ENCODE measurements at regions of chr19 and their contacts with region 1.

Region 1: GRCh38 chr19:40155749-40156265 is 35.4 kb upstream of the MAP3K10 start:
- DNase-seq: peak; percentile 99
- ATAC-seq: peak; percentile 90
- H3K4me3 ChIP-seq: peak overlapping the region in 1 of 2 experiments; percentile 5; a peak in 2 of 4 replicates
- H3K27ac ChIP-seq: no peak overlapping the region
- H3K4me1 ChIP-seq: 0 out of 2 replicates have a peak, but pooled peaks cover 2% of the 10 kb centered on the region
- H3K27me3 ChIP-seq: no peaks in the 10 kb centered on the region
- CTCF ChIP-seq: no peak

Region 2: GRCh38 chr19:39474139-39474622 is 681.6 kb before region 1 on chr19:
- CTCF ChIA-PET with region 1: interaction called, 3 read pairs
- POLR2A ChIA-PET with region 1: interaction called, 10 read pairs
- in situ Hi-C with region 1: no loop called
- intact Hi-C with region 1: no loop called
- DNase-seq: no peak
- ATAC-seq: peak; percentile 75
- H3K4me3 ChIP-seq: no peak overlapping the region
- H3K27ac ChIP-seq: no peak overlapping the region
- H3K4me1 ChIP-seq: no peaks in the 10 kb centered on the region
- H3K27me3 ChIP-seq: no peaks in the 10 kb centered on the region
- CTCF ChIP-seq: no peak

Region 3: DNA sequence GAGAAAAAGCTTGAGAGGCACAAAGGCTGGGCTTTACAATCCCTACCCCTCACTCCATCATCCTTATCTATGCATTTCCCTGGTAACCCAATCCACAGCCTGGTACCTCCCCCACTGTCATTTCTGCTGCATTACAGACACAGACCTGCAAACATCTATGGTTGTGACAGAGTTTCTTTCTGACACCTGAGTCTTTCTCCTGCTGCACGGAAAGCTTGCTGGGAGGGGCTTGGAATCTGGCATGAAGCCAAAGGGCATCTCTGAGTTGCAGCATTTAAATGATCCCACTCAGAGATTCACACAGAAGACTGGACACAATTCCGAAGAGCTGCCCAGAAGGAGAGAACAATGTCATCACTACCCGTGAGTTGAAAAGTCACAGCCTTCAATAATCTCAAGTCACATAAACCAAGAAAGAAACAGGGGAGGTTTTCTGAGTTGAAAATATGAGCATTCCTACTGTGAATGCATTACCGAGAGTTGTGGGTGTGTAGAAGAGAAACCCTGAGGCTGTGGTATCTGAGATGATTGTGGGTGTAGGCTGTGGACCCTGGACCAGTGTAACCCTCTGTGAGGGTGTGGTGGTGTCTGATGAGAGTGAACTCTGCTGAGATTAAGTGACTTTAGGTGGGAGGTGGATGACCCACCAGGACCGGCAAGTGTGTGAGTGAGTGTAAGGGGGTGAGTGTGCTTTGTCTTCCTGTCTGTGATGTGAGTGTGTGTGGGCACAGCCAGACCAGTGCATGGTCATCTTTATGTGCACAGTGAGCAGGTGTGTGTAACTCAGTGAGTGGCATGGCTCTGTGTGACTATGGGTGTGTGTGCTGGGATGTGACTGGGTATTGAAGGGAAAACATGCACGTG is 451.4 kb before region 1 on chr19 and contains the start of gene LGALS14:
- CTCF ChIA-PET with region 1: no interaction called
- POLR2A ChIA-PET with region 1: no interaction called
- in situ Hi-C with region 1: no loop called
- intact Hi-C with region 1: no loop called
- DNase-seq: no peak
- ATAC-seq: peak; percentile 52
- H3K4me3 ChIP-seq: no peak within 1 kb of the TSS
- H3K27ac ChIP-seq: no peak within 1 kb of the TSS
- H3K4me1 ChIP-seq: no peaks in the 10 kb centered on the region
- H3K27me3 ChIP-seq: peaks cover 78% of the 10 kb centered on the region
- CTCF ChIP-seq: no peak
- total RNA-seq, gene LGALS14: not detected

Region 4: DNA sequence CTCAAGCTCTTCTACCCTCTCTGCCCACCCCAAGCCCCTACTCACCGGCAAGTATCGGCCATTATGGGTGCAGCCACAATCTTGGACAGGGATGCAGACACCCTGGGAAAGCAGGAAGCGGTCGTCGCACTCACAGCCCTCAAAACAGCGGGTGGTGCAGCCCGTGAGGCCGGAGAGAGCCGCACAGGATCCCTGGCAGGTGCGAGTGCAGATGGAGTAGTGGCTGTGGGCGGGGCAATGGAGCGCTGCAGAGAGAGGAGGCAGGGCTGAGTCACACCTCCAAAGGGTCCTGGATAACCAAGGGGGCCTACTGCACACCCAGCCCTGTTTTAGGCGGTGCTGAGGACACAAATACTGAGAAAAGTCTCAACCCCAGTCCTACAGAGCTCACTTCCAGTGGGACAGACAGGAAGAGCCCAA is 285.6 kb before region 1 on chr19:
- CTCF ChIA-PET with region 1: no interaction called
- POLR2A ChIA-PET with region 1: no interaction called
- in situ Hi-C with region 1: no loop called
- intact Hi-C with region 1: no loop called
- DNase-seq: no peak
- ATAC-seq: 0 out of 2 replicates have a peak, but pooled peaks have one; percentile 0
- H3K4me3 ChIP-seq: no peak overlapping the region
- H3K27ac ChIP-seq: no peak overlapping the region
- H3K4me1 ChIP-seq: no peaks in the 10 kb centered on the region
- H3K27me3 ChIP-seq: peaks cover 12% of the 10 kb centered on the region; the same call in 1 of the 2 replicates
- CTCF ChIP-seq: no peak

Region 5: GRCh38 chr19:40190891-40191835 is 35.4 kb after region 1 on chr19 and contains the start of gene MAP3K10:
- CTCF ChIA-PET with region 1: interaction called, 14 read pairs
- POLR2A ChIA-PET with region 1: interaction called, 24 read pairs
- in situ Hi-C with region 1: no loop called
- intact Hi-C with region 1: no loop called
- DNase-seq: peak; percentile 99
- ATAC-seq: peak; percentile 97
- H3K4me3 ChIP-seq: peak within 1 kb of the TSS; percentile 36 to 57
- H3K27ac ChIP-seq: peak within 1 kb of the TSS; percentile 49
- H3K4me1 ChIP-seq: peaks cover 23% of the 10 kb centered on the region
- H3K27me3 ChIP-seq: peaks cover 9% of the 10 kb centered on the region
- CTCF ChIP-seq: no peak
- total RNA-seq, gene MAP3K10: 255 TPM

Region 6: GRCh38 chr19:40216013-40216776 is 60.4 kb after region 1 on chr19:
- CTCF ChIA-PET with region 1: interaction called, 40 read pairs
- POLR2A ChIA-PET with region 1: interaction called, 16 read pairs
- in situ Hi-C with region 1: no loop called
- intact Hi-C with region 1: no loop called
- DNase-seq: no peak
- ATAC-seq: no peak
- H3K4me3 ChIP-seq: no peak overlapping the region
- H3K27ac ChIP-seq: no peak overlapping the region
- H3K4me1 ChIP-seq: peaks cover 27% of the 10 kb centered on the region
- H3K27me3 ChIP-seq: peaks cover 23% of the 10 kb centered on the region
- CTCF ChIP-seq: no peak

Region 7: DNA sequence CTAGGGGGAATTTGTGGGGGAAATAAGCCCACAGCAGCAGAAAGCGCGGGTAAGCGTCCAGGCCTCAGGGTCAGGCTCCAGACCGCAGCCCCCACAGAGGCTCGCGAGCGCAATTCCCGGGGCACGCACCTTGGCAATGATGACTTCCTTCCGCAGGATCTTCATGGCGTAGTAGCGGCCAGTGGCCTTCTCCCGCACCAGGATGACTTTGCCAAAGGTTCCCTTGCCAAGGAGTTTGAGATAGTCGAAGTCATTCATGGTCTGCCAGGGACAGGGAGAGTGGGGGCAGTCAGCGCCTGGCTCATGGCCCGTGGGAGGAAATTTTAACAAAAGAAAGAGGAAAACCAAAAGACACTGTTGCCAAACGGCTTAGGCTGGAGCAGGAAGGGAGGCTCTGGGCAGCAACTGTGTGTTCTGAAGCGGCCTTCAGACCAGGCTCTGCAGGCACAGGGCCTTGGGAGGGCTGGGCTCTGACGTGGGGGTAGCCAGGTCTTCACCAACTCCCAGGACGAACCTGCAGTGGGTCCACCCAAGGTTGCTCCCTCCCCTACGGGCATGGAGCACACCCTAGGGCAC is 86.1 kb after region 1 on chr19:
- CTCF ChIA-PET with region 1: interaction called, 15 read pairs
- POLR2A ChIA-PET with region 1: no interaction called
- in situ Hi-C with region 1: no loop called
- intact Hi-C with region 1: no loop called
- DNase-seq: no peak
- ATAC-seq: peak; percentile 5; the same call in 1 of the 2 replicates
- H3K4me3 ChIP-seq: no peak overlapping the region
- H3K27ac ChIP-seq: no peak overlapping the region
- H3K4me1 ChIP-seq: no peaks in the 10 kb centered on the region
- H3K27me3 ChIP-seq: no peaks in the 10 kb centered on the region
- CTCF ChIP-seq: no peak

Measured in Panc1 (cell line).